ENCODE measurements at regions of chr9 and their contacts with region 1.

Region 1: GRCh38 chr9:105608721-105609598 is 51.0 kb downstream of the FKTN start:
- DNase-seq: no peak
- H3K4me3 ChIP-seq: no peak overlapping the region
- H3K27ac ChIP-seq: no peak overlapping the region
- H3K4me1 ChIP-seq: no peaks in the 10 kb centered on the region
- H3K27me3 ChIP-seq: no peaks in the 10 kb centered on the region
- CTCF ChIP-seq: peak; percentile 49 to 58 (median 53)
- EP300 ChIP-seq: no peak
- POLR2A ChIP-seq: no peak

Region 2: DNA sequence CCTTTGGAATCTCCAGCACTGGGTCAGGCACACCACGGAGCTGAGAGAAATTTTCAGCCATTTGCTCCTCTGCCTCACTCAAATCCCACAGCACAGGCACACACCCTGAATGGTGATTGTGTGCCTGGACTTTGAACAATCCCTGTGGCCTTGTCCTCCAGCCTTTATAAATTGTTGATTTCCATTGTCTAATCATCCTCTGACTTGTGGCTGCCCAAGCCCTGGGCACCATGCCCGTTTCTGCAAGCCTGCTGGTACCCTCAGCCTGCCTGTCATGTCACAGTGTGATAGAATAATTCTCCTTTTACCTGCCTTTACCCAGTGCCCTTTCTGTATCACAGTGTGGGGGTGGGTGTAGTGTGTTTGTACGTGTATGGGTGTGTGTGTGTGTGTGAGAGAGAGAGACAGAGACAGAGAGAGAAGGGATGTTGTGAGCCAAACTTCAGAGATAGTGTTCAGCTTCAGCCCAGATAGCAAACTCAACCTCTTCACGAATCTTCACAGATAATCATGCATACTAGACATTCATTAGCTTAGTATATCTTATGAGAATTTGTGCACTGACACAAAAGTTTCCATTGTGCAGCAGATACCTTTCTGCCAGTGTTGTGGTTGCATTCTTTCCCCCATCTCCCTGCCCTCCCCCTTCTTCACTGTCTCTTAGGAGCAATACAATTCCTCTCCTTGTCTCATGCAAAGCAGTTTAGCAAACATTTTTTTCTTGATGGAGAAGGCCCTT is 392.4 kb before region 1 on chr9:
- in situ Hi-C with region 1: no loop called
- intact Hi-C with region 1: no loop called
- DNase-seq: peak; percentile 54
- H3K4me3 ChIP-seq: no peak overlapping the region
- H3K27ac ChIP-seq: no peak overlapping the region
- H3K4me1 ChIP-seq: peaks cover 5 to 13% (median 10%) of the 10 kb centered on the region in 4 donors
- H3K27me3 ChIP-seq: no peaks in the 10 kb centered on the region
- CTCF ChIP-seq: no peak
- EP300 ChIP-seq: no peak
- POLR2A ChIP-seq: no peak

Region 3: DNA sequence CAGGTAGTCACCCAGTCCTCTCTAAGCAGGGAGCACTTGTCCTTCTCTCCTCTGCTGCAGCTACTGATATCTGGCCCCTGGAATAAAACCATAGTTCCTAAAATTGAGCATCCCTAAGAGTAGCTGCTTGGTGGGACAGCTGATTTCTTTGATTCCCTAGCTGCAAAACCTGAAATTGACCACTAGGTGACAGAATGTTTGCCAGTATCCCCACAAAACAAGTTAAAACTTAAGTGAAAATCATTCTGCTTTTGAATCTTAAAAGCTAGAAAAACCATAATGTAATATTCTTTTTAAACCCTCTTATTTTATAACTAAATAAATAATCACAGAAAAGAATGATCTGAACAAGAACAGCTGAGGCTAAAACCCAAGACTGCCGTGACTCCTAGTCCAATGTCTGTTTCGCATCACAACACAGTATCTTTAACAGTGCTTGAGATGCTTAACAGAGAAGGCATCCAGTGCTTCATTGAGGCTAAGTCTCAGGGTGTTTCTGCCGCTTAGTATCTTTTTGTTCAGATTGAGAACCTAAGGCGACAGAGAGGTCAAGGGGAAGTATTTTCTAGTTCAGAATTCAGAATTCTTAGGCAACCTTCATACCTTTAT is 28.9 kb after region 1 on chr9:
- in situ Hi-C with region 1: no loop called
- intact Hi-C with region 1: no loop called
- DNase-seq: no peak
- H3K4me3 ChIP-seq: no peak overlapping the region
- H3K27ac ChIP-seq: no peak overlapping the region
- H3K4me1 ChIP-seq: peaks cover 0 to under 1% (median 0%) of the 10 kb centered on the region in 4 donors
- H3K27me3 ChIP-seq: no peaks in the 10 kb centered on the region
- CTCF ChIP-seq: peak in 4 of 5 experiments; percentile 16 to 40 (median 30)
- EP300 ChIP-seq: no peak
- POLR2A ChIP-seq: no peak

Region 4: GRCh38 chr9:105708405-105708804 is 99.4 kb after region 1 on chr9:
- in situ Hi-C with region 1: loop called in 3 of 4 experiments (anchors 10 to 25 kb)
- intact Hi-C with region 1: loop called (anchors 10 kb)
- DNase-seq: no peak
- H3K4me3 ChIP-seq: no peak overlapping the region
- H3K27ac ChIP-seq: no peak overlapping the region
- H3K4me1 ChIP-seq: peaks cover 0 to 8% (median 3%) of the 10 kb centered on the region in 4 donors
- H3K27me3 ChIP-seq: no peaks in the 10 kb centered on the region
- CTCF ChIP-seq: no peak
- EP300 ChIP-seq: no peak
- POLR2A ChIP-seq: no peak

Region 5: GRCh38 chr9:105881654-105882349 is 272.8 kb after region 1 on chr9:
- in situ Hi-C with region 1: loop called in 1 of 4 experiments (anchors 25 kb)
- intact Hi-C with region 1: no loop called
- DNase-seq: peak; percentile 61
- H3K4me3 ChIP-seq: no peak overlapping the region
- H3K27ac ChIP-seq: no peak overlapping the region
- H3K4me1 ChIP-seq: no peaks in the 10 kb centered on the region
- H3K27me3 ChIP-seq: no peaks in the 10 kb centered on the region
- CTCF ChIP-seq: peak; percentile 55 to 86 (median 76)
- EP300 ChIP-seq: no peak
- POLR2A ChIP-seq: no peak